Activated T-helper 1 cell treated with anti-CD3 and anti-CD28 coated beads, Interleukin-12 subunit alpha, Interleukin-12 subunit beta, Interleukin-2, Interleukin-4 antibody, amounts not matched to agents 30 ng/mL and 10 ng/mL and 1 ng/mL, durations not matched to agents 14 hours and 24 hours and 36 hours (primary cell): ENCODE measurements at regions of chr20 and their contacts with region 1.

Region 1: GRCh38 chr20:1466211-1467081 is at the start of gene NSFL1C:
- DNase-seq: peak; percentile 97
- H3K4me3 Mint-ChIP-seq: peak within 1 kb of the TSS; percentile 90
- H3K27ac Mint-ChIP-seq: peak within 1 kb of the TSS; percentile 82
- H3K4me1 Mint-ChIP-seq: peaks cover 45% of the 10 kb centered on the region
- H3K27me3 Mint-ChIP-seq: peaks cover 12% of the 10 kb centered on the region
- total RNA-seq, gene NSFL1C: 108 and 111 TPM in 2 replicates

Region 2: DNA sequence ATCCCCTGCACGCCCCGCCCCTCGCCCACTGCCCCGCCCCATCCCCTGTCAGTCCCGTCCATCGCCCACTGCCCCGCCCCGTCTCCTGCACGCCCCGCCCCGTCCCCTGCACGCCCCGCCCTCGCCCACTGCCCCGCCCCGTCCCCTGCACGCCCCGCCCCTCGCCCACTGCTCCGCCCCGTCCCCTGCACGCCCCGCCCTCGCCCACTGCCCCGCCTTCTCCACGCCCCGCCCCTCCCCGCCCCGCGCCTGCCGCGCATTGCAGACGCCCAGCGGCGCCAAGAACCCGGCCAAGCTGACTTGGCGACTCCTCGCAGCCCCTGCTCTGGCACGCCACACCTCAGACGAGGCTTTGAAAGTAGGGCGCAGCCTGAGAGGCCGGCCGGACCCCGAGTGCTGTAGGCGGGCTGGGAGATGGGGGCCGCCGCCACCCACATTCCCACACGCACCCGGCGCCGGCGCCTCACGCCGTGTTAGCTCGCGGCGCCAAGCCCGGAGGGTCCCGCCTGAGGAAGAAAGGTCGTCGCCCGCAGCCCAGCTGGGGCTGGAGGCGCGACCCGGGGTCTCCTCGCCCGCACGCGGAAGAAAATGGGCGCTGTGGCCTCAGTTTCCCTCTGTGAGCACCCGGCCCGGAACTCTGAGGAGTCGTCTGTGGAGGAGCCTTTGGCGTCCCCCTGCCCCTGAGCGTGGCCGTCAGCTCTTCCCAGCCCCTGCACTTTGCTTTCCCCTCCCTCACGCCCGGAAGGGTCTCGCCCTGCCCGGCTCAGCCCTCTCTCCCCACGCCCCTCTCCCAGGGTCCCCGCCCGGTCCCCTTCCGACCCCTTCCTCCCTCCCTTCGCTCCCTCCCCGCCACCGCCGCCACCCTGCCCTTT is 240.4 kb before region 1 on chr20 and contains the start of gene RAD21L1:
- intact Hi-C with region 1: loop called (anchors 5 kb)
- DNase-seq: peak; percentile 57
- H3K4me3 Mint-ChIP-seq: peak within 1 kb of the TSS; percentile 84
- H3K27ac Mint-ChIP-seq: no peak within 1 kb of the TSS
- H3K4me1 Mint-ChIP-seq: peaks cover 7% of the 10 kb centered on the region
- H3K27me3 Mint-ChIP-seq: peaks cover 36% of the 10 kb centered on the region
- total RNA-seq, gene RAD21L1: not detected in 2 replicates

Region 3: DNA sequence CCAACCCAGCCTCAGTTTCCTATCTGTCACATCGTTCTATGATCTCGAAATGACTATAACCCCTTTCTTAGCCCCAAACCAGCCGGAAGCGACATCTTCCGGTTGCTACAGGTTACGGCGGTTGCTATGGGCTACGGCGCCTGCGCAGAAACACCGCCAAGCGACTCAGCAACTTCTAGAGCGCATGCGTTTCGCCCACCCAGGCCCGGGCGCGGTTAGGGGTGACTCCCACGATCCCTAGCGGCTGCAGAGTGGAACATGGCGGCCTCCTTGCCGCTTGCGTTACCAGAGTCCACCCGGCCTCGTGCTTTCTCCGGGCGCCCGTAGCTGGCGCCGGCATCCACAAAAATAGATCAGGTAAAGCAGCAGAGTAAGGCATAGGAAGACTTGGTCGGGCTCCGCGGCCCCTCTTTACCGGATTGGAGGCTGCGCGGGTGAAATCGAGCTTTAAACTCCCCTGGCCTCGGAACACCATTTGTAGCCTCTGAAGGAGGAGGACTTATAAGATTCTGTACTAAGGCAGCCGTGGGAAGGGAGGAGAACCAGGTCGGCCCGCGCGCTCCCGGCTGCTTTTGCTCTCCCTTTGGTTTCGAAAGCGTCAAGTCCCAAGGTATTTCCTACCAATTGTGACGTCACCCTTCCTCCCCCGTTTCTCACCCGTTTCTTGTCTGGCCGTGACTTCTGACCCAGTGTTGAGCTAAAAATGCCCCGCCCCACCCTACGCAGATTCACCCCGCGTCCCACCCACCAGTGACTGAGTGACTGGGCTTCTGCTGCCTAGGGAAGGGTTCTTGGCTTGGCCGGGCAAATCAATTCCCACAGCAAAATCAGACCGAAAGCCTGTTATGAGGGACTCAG is 141.0 kb before region 1 on chr20:
- intact Hi-C with region 1: loop called (anchors 1 kb)
- DNase-seq: peak; percentile 98
- H3K4me3 Mint-ChIP-seq: no peak overlapping the region
- H3K27ac Mint-ChIP-seq: no peak overlapping the region
- H3K4me1 Mint-ChIP-seq: peaks cover 14% of the 10 kb centered on the region
- H3K27me3 Mint-ChIP-seq: peaks cover 6% of the 10 kb centered on the region

Region 4: GRCh38 chr20:1503564-1504227 is 37.2 kb after region 1 on chr20:
- intact Hi-C with region 1: loop called (anchors 1 kb)
- DNase-seq: peak; percentile 68
- H3K4me3 Mint-ChIP-seq: no peak overlapping the region
- H3K27ac Mint-ChIP-seq: no peak overlapping the region
- H3K4me1 Mint-ChIP-seq: peaks cover 5% of the 10 kb centered on the region
- H3K27me3 Mint-ChIP-seq: peaks cover 14% of the 10 kb centered on the region

Region 5: DNA sequence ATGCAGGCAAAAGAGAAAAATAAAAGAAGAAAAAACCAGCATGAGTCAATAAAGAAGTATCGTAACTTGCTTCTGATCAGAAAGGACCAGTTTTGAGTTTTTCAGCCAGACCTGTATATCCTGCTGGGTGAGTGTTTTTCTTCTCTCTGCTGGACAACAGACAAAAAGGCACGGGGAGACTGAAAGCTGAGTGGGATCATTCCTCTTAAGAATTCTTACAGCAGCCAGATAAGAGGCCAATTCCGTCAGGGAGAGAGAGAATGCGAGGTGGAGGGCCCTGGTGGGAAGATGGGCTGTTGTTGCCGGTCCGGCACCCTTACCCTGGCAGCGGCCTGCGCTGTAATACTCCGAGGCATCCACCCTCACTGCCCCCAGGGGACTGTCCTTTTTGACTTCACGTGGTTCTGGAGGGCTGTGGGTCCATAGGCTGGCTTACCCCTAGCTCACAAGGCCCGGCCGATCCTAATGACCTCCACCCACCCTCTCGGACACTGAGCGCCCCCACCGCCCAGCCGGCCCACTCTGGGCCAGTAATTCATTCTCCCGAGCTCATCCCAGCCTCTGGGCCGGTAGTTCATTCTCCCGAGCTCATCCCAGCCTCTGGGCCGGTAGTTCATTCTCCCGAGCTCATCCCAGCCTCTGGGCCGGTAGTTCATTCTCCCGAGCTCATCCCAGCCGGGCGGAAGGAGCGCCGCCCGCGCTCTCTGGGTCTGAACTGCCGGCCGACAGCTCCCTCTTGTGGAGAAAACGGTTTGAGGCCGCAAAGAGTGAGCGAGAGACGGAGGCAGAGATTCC is 310.4 kb after region 1 on chr20:
- intact Hi-C with region 1: loop called (anchors 2 kb)
- DNase-seq: peak; percentile 74
- H3K4me3 Mint-ChIP-seq: peak overlapping the region; percentile 80
- H3K27ac Mint-ChIP-seq: peak overlapping the region; percentile 27
- H3K4me1 Mint-ChIP-seq: peaks cover 17% of the 10 kb centered on the region
- H3K27me3 Mint-ChIP-seq: peaks cover 11% of the 10 kb centered on the region